MCF 10A (cell line): ENCODE measurements at regions of chr5 and their contacts with region 1.

Region 1: GRCh38 chr5:95961617-95962474 is at the start of gene ELL2:
- DNase-seq: peak; percentile 98
- H3K4me3 Mint-ChIP-seq: peak within 1 kb of the TSS; percentile 90
- H3K27ac Mint-ChIP-seq: peak within 1 kb of the TSS; percentile 91
- H3K4me1 Mint-ChIP-seq: peaks cover 28% of the 10 kb centered on the region
- H3K27me3 Mint-ChIP-seq: no peaks in the 10 kb centered on the region
- CTCF ChIP-seq: no peak
- total RNA-seq, gene ELL2: 144 and 147 TPM in 2 replicates

Region 2: GRCh38 chr5:95727764-95728191 is 234.1 kb before region 1 on chr5:
- CTCF ChIA-PET with region 1: no interaction called
- POLR2A ChIA-PET with region 1: no interaction called
- intact Hi-C with region 1: no loop called
- DNase-seq: no peak
- H3K4me3 Mint-ChIP-seq: no peak overlapping the region
- H3K27ac Mint-ChIP-seq: no peak overlapping the region
- H3K4me1 Mint-ChIP-seq: no peaks in the 10 kb centered on the region
- H3K27me3 Mint-ChIP-seq: no peaks in the 10 kb centered on the region
- CTCF ChIP-seq: no peak

Region 3: GRCh38 chr5:95858661-95859326 is 103.1 kb before region 1 on chr5:
- CTCF ChIA-PET with region 1: interaction called, 7 read pairs
- POLR2A ChIA-PET with region 1: interaction called, 113 read pairs
- intact Hi-C with region 1: loop called (anchors 1 kb)
- DNase-seq: peak; percentile 96
- H3K4me3 Mint-ChIP-seq: peak overlapping the region; percentile 67
- H3K27ac Mint-ChIP-seq: peak overlapping the region; percentile 99
- H3K4me1 Mint-ChIP-seq: peaks cover 57% of the 10 kb centered on the region
- H3K27me3 Mint-ChIP-seq: no peaks in the 10 kb centered on the region
- CTCF ChIP-seq: peak; percentile 93

Region 4: GRCh38 chr5:95924720-95925377 is 37.0 kb before region 1 on chr5:
- CTCF ChIA-PET with region 1: interaction called, 3 read pairs
- POLR2A ChIA-PET with region 1: interaction called, 43 read pairs
- intact Hi-C with region 1: no loop called
- DNase-seq: peak; percentile 89
- H3K4me3 Mint-ChIP-seq: peak overlapping the region; percentile 54
- H3K27ac Mint-ChIP-seq: peak overlapping the region; percentile 87
- H3K4me1 Mint-ChIP-seq: peaks cover 50% of the 10 kb centered on the region
- H3K27me3 Mint-ChIP-seq: no peaks in the 10 kb centered on the region
- CTCF ChIP-seq: no peak

Region 5: GRCh38 chr5:96079075-96079474 is 117.2 kb after region 1 on chr5:
- CTCF ChIA-PET with region 1: interaction called, 5 read pairs
- POLR2A ChIA-PET with region 1: interaction called, 60 read pairs
- intact Hi-C with region 1: loop called (anchors 2 kb)
- DNase-seq: peak; percentile 93
- H3K4me3 Mint-ChIP-seq: peak overlapping the region; percentile 25
- H3K27ac Mint-ChIP-seq: peak overlapping the region; percentile 96
- H3K4me1 Mint-ChIP-seq: peaks cover 57% of the 10 kb centered on the region
- H3K27me3 Mint-ChIP-seq: no peaks in the 10 kb centered on the region
- CTCF ChIP-seq: no peak

Region 6: DNA sequence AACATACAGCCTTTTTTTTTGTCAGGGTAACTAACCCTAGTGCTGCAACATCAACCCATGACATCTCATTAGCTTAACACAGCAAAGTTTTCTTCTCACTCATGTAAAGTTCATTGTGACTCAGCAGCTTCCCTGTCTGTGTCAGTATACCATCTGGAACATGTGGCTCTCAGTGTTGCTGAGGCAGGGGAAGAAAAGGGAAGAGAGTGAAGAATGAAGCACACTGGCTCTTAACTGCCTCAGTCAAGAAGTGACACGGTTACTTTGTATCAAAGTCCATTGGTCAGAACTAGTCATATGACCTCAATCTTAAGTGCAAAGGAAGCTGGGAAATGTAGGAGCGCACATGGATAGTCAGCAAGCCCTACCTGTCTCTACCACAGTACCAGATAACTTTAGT is 184.8 kb after region 1 on chr5:
- CTCF ChIA-PET with region 1: interaction called, 6 read pairs
- POLR2A ChIA-PET with region 1: interaction called, 20 read pairs
- intact Hi-C with region 1: loop called (anchors 5 kb)
- DNase-seq: peak; percentile 41
- H3K4me3 Mint-ChIP-seq: no peak overlapping the region
- H3K27ac Mint-ChIP-seq: no peak overlapping the region
- H3K4me1 Mint-ChIP-seq: peaks cover 27% of the 10 kb centered on the region
- H3K27me3 Mint-ChIP-seq: no peaks in the 10 kb centered on the region
- CTCF ChIP-seq: no peak

Region 7: DNA sequence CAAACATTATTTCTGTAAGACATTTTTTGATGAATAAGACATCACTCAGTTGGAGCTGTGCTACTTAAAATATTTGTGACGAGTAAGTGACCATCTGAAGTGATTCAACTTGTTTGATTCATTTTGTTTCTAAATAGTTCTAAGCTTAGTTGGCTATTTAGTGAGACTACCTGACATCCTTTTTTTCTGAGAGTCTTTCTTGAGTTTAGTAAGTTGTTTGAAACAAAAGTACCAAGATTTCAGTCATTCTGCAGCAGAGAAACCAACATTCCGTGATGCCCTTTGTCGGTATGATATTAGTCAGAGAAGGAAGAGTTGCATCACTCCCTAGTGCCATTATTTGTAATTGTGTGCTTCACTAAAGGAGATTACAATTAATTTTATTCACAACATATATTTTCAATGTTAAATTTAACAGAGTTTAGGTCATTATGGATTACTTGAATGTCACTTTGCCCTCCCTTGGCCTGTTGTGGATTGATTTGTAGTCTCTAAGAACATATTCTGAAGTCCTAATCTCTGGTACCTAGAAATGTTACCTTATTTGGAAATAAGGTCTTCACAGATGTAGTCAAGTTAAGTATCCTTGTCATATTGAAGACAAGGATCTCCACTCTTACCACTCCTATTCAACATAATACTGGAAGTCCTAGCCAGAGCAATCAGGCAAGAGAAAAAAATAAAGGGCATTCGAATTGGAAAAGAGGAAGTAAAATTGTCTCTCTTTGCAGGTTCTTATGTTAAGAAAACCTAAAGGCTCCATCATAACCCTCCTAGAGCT is 259.0 kb after region 1 on chr5:
- CTCF ChIA-PET with region 1: interaction called, 4 read pairs
- POLR2A ChIA-PET with region 1: interaction called, 6 read pairs
- intact Hi-C with region 1: loop called (anchors 1 kb)
- DNase-seq: peak; percentile 53
- H3K4me3 Mint-ChIP-seq: no peak overlapping the region
- H3K27ac Mint-ChIP-seq: peak overlapping the region; percentile 87
- H3K4me1 Mint-ChIP-seq: peaks cover 16% of the 10 kb centered on the region
- H3K27me3 Mint-ChIP-seq: no peaks in the 10 kb centered on the region
- CTCF ChIP-seq: no peak